ENCODE measurements at regions of chr6 and their contacts with region 1.

Region 1: DNA sequence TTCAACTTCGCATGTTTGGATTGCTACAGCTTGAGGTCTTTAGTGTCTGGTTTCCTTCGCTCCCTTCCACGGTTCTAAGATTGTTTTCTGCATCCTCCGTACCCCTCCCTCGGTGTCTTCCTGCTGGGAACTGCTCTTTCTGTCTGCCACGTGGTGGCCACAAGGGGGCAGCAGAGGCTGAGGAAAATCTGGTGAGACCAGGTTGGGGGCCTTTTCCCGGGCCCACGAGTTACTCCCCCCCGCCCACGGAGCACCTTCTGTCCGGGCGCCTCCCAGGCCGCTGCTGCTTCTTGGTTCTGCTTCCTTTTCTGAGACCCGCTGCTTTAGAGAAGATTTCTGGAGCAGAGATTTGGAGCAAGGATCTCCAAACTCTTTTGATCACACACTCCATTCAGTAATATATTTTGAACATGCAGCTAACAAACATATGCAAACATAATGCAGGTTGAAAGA is 21.1 kb upstream of the NOTCH4 start:
- DNase-seq: peak; percentile 74
- H3K4me3 Mint-ChIP-seq: no peak overlapping the region
- H3K27ac Mint-ChIP-seq: no peak overlapping the region
- H3K4me1 Mint-ChIP-seq: peaks cover 20% of the 10 kb centered on the region
- H3K27me3 Mint-ChIP-seq: peaks cover 8% of the 10 kb centered on the region

Region 2: DNA sequence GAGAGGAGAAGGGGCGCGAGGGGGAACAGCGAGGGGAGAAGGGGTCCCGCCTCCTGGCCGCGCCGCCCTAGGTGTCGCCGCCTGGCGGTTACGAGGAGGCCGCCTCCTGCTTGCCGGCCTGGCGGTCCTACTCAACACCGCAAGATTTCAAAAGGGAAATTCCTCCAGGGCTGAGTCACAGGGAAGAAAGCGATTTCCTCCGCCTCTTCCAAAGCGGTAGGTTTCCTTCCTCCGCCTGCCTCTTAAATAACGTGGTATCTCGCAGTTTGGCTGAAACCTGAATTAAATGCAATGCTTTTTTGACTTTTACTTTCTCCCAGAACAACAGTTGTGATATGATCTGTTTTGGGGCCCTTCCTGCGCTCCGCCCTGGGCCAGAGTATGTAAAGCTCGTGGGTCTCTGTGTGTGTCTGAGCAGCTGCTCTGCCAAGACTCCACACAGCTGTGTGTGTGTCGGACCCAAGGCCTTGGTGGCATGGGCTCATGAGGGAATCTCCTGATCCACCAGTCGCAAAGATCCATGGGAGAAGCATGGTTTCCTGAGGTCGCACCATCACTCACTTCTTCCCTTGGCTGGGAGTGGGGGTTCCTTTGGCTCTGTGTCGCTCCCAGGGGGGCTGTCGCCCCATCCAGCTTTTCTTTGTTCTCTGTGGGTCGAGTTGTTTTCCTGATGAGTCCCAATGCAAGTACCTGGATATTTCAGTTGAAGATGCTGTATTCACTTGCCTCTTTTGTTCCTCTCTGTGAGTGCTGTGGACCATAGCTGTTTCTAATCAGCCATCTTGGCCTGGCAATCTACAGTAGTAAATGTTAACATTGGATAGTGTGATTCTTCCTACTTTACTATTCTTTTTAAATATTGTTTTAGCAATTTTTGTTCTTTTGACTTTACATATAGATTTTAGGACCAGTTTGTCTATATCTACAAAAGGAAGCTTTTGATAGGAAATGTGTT is 10.5 kb after region 1 on chr6:
- CTCF ChIA-PET with region 1: interaction called, 17 read pairs
- POLR2A ChIA-PET with region 1: no interaction called
- intact Hi-C with region 1: loop called (anchors 1 kb)
- DNase-seq: peak; percentile 80
- H3K4me3 Mint-ChIP-seq: peak overlapping the region; percentile 3
- H3K27ac Mint-ChIP-seq: peak overlapping the region; percentile 14
- H3K4me1 Mint-ChIP-seq: peaks cover 30% of the 10 kb centered on the region
- H3K27me3 Mint-ChIP-seq: peaks cover 21% of the 10 kb centered on the region

Region 3: DNA sequence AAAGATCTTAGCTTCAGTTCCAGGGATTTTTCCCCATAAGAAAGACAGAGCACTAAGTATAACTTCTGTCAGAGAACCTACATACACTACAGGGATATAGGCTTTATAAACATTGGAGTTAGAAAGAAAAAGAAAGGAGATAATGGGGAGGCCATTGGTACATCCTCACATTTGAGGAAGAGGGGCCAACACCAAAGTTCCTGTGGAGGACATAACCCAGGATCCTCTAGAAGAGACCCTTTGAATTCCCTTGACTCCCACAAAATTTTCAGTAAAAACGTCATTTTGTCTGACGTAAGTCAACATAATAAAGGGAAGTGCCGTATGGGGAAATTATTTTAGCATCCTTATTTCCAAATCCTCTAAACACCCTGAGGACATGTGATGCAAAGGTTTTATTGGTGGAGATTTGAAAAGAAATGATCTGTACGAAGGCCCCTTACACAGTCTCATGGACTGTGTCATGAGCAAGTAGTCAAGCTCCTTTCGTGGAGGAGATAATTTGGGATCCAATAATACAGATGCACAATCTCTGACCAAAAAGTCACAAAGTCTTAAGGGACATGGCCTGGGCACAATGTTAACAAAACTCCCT is 227.9 kb after region 1 on chr6:
- CTCF ChIA-PET with region 1: no interaction called
- POLR2A ChIA-PET with region 1: no interaction called
- intact Hi-C with region 1: no loop called
- DNase-seq: no peak
- H3K4me3 Mint-ChIP-seq: no peak overlapping the region
- H3K27ac Mint-ChIP-seq: no peak overlapping the region
- H3K4me1 Mint-ChIP-seq: no peaks in the 10 kb centered on the region
- H3K27me3 Mint-ChIP-seq: peaks cover 36% of the 10 kb centered on the region

Region 4: DNA sequence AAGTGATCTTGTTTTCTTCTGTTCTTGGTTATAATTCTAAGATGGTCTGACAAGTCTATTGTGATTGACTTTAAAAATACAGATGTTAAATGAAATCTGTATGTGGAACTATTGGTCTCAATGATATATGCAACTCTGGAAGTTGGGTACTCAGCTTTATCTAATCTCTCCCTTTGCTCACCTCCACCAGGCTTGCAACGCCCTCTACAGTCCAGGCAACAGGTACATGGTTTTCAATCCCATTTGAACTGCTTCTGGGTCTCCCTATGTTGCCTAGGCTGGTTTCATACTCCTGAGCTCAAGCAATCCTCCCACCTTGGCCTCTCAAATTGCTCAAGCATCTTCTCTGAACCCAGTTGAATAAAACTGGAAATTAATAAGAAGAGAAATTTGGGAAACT is 447.0 kb after region 1 on chr6:
- CTCF ChIA-PET with region 1: no interaction called
- POLR2A ChIA-PET with region 1: no interaction called
- intact Hi-C with region 1: loop called (anchors 10 kb)
- DNase-seq: peak; percentile 65
- H3K4me3 Mint-ChIP-seq: no peak overlapping the region
- H3K27ac Mint-ChIP-seq: no peak overlapping the region
- H3K4me1 Mint-ChIP-seq: peaks cover 6% of the 10 kb centered on the region
- H3K27me3 Mint-ChIP-seq: peaks cover 9% of the 10 kb centered on the region

Region 5: DNA sequence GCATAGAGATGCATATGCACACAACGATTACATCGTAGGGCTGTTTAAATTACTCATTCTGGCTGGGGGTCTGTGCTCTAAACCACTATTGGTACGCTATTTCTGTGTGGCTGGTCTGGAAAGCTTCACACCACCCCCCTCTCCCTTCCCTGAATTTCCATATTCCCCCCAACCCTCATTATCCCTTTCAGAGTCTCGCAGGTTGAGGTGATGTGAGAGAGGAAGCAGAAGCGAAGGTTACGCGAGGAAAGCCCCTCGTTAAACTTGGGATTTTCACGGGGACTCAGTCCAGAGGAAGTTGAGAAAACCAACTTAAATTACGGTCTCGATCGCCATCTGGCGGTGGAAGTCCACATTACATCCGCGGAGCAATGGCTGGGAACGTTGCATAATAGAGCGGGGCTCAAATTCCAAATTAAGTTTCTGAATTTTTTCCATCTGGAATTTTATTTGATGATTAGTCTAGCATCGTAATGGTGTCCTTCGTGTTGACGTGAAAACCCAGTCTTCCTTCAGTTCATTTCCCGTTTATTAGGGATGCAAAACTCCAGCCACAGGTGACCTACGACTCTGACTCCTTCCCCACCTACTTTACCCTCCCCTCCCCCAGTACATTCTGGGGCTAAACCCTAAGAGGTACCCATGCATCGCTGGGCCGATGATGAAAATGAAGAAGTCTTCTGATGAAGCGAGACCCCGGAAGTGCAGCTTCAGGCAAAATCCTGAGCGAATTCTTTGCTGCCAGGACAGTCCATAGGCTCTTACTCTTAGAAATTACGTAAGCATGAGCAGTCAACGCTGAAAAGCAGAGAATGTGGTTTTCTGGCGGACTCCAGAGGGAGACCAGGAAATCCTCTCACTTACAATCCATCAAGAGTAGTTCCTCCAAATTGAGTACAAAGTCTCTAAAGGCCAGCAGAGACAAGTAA is 552.1 kb after region 1 on chr6:
- CTCF ChIA-PET with region 1: interaction called, 3 read pairs
- POLR2A ChIA-PET with region 1: no interaction called
- intact Hi-C with region 1: loop called (anchors 10 kb)
- DNase-seq: peak; percentile 84
- H3K4me3 Mint-ChIP-seq: peak overlapping the region; percentile 38
- H3K27ac Mint-ChIP-seq: no peak overlapping the region
- H3K4me1 Mint-ChIP-seq: peaks cover 16% of the 10 kb centered on the region
- H3K27me3 Mint-ChIP-seq: peaks cover 54% of the 10 kb centered on the region